ENCODE measurements at regions of chr22 and their contacts with region 1.

Region 1: GRCh38 chr22:36454916-36455570 is 26.4 kb downstream of the TXN2 start:
- DNase-seq: peak; percentile 88 to 99 (median 96)
- ATAC-seq: peak; percentile 71
- H3K4me3 ChIP-seq: peak overlapping the region; percentile 64 to 84
- H3K4me3 Mint-ChIP-seq: peak overlapping the region; percentile 79
- H3K27ac ChIP-seq: peak overlapping the region; percentile 91 to 96
- H3K27ac Mint-ChIP-seq: peak overlapping the region; percentile 90
- H3K4me1 ChIP-seq: peaks cover 51% of the 10 kb centered on the region
- H3K4me1 Mint-ChIP-seq: peaks cover 43% of the 10 kb centered on the region
- H3K27me3 ChIP-seq: no peaks in the 10 kb centered on the region
- H3K27me3 Mint-ChIP-seq: no peaks in the 10 kb centered on the region
- CTCF ChIP-seq: no peak

Region 2: DNA sequence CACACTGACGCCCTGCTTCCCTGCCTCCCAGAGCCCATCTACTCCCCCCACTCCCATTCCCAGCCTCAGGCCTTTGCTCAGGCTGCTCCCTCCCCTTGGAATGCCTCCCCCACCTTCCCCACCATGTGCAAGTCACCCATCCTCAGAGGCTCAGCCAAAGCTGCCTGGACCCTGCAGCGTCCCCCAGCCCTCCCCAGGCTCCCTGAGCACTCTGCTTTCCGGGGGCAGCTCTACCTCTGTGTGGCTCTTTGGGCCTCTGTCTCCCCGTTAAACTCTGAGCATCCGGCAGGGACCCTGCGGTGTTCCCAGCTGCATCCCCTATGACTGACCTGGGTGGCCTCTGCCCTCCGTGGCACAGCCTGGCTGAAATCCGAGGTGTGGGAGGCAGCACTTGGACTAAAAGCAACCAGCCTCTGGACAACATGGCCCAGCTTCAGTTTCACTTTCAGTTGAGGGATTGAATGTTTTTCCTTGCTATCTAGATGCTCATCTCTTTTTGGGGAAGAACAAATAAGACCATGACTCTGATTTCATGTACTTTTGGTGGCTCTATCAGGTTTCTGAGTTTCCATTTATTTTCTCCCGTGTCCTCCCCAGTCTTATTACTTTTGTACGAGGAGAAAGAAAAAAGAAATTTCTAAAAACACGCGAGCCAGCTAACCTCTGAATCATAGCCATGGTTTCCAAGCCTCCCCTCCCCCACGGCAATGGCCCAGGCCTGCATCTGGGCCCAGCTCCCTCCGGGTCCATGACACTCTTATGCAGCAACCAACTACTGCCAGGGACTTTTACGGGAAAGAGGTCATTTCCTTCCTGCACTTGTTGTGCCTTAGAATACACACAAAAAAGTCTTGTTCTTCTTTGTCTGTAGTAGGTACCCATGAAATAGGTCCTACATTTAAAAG is 298.3 kb before region 1 on chr22:
- CTCF ChIA-PET with region 1: no interaction called
- POLR2A ChIA-PET with region 1: no interaction called
- intact Hi-C with region 1: loop called in 1 of 2 experiments (anchors 2 kb)
- DNase-seq: peak; percentile 36 to 90 (median 80)
- ATAC-seq: peak; percentile 46
- H3K4me3 ChIP-seq: peak overlapping the region; percentile 86 to 91
- H3K4me3 Mint-ChIP-seq: peak overlapping the region; percentile 97
- H3K27ac ChIP-seq: peak overlapping the region; percentile 77 to 96
- H3K27ac Mint-ChIP-seq: peak overlapping the region; percentile 99
- H3K4me1 ChIP-seq: peaks cover 62% of the 10 kb centered on the region
- H3K4me1 Mint-ChIP-seq: peaks cover 90% of the 10 kb centered on the region
- H3K27me3 ChIP-seq: no peaks in the 10 kb centered on the region
- H3K27me3 Mint-ChIP-seq: no peaks in the 10 kb centered on the region
- CTCF ChIP-seq: no peak

Region 3: DNA sequence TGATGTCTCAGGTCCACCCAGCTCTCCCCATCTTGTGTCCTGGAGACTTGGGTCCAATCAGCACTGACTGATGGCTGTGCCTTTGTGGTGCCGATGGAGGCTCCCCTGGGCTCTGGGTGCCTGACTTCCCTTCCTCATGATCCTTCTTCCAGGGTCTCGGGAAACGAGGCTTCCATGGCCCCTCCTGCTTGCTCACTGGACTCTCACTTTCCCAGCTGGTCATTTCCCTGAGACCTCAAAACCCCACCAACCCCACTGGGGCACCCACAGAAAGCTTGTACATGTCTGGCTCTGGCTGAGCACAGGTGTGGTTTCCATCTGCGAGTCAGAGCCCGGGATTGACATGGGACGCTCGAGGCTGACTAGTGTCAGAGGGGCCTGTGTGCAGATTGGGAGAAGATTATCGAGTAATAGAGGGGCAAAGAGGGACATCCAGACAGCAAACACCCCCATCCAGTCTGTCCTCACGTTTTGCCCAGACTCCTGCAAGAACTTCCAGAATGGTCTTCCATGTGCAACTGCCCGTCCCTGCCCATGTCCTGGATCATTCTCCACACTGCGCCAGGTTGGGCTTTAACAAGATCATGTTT is 187.1 kb before region 1 on chr22:
- CTCF ChIA-PET with region 1: no interaction called
- POLR2A ChIA-PET with region 1: no interaction called
- intact Hi-C with region 1: no loop called
- DNase-seq: no peak
- ATAC-seq: no peak
- H3K4me3 ChIP-seq: no peak overlapping the region
- H3K4me3 Mint-ChIP-seq: no peak overlapping the region
- H3K27ac ChIP-seq: no peak overlapping the region
- H3K27ac Mint-ChIP-seq: no peak overlapping the region
- H3K4me1 ChIP-seq: no peaks in the 10 kb centered on the region
- H3K4me1 Mint-ChIP-seq: peaks cover 1% of the 10 kb centered on the region
- H3K27me3 ChIP-seq: no peaks in the 10 kb centered on the region
- H3K27me3 Mint-ChIP-seq: no peaks in the 10 kb centered on the region
- CTCF ChIP-seq: no peak

Region 4: GRCh38 chr22:36365020-36365411 is 90.0 kb before region 1 on chr22:
- CTCF ChIA-PET with region 1: no interaction called
- POLR2A ChIA-PET with region 1: interaction called, 3 read pairs
- intact Hi-C with region 1: loop called (anchors 5 kb)
- DNase-seq: peak; percentile 70 to 98 (median 84)
- ATAC-seq: peak; percentile 86
- H3K4me3 ChIP-seq: no peak overlapping the region
- H3K4me3 Mint-ChIP-seq: peak overlapping the region; percentile 68
- H3K27ac ChIP-seq: peak overlapping the region; percentile 57 to 86
- H3K27ac Mint-ChIP-seq: peak overlapping the region; percentile 95
- H3K4me1 ChIP-seq: peaks cover 98% of the 10 kb centered on the region
- H3K4me1 Mint-ChIP-seq: peaks cover 94% of the 10 kb centered on the region
- H3K27me3 ChIP-seq: no peaks in the 10 kb centered on the region
- H3K27me3 Mint-ChIP-seq: no peaks in the 10 kb centered on the region
- CTCF ChIP-seq: no peak

Region 5: DNA sequence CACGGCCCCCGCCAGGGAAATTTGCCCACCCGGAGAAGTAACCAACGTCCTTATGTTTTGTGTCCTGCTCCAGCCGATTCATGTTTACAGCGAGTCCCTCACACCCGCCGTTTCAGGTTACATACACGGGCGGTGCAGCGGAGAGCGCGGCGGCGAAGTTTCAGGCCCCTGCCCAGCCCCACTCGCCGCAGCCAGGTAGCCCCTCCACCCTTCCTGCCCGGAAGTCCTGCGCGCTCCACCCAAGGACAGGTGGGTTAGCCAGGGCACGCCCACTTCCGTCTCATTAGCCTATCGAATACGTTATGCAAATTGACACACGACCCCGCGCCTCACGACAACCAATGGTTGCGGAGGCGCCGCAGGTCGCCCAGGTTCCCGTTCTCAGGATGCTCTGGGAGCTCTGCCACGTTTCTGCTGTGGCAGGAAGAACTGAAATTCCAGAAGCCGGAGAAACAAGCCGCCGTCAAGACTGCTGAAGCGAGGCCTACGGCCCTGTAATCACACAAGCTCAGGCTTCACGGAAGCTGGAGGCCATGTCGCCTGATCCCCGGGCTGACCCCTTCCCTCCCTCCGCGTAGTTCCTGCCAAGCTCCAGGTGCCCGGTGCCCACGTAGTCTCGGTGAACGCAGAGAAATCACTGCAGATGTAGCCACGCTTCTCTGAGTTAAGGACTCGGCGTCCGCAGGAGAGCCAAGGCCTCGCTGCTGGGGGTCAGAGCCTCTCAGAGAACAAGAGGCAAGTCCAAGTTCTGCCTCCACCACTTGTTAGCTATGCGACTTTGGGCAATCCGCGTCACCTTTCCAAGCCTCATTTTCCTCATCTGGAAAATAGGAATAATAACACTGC is 44.9 kb before region 1 on chr22:
- CTCF ChIA-PET with region 1: interaction called, 4 read pairs
- POLR2A ChIA-PET with region 1: interaction called, 7 read pairs
- intact Hi-C with region 1: loop called (anchors 1 to 5 kb)
- DNase-seq: peak; percentile 18 to 85 (median 75)
- ATAC-seq: peak; percentile 70
- H3K4me3 ChIP-seq: peak overlapping the region; percentile 28 to 58
- H3K4me3 Mint-ChIP-seq: peak overlapping the region; percentile 72
- H3K27ac ChIP-seq: peak overlapping the region; percentile 40 to 53
- H3K27ac Mint-ChIP-seq: peak overlapping the region; percentile 93
- H3K4me1 ChIP-seq: peaks cover 57% of the 10 kb centered on the region
- H3K4me1 Mint-ChIP-seq: peaks cover 51% of the 10 kb centered on the region
- H3K27me3 ChIP-seq: no peaks in the 10 kb centered on the region
- H3K27me3 Mint-ChIP-seq: no peaks in the 10 kb centered on the region
- CTCF ChIP-seq: no peak

Region 6: DNA sequence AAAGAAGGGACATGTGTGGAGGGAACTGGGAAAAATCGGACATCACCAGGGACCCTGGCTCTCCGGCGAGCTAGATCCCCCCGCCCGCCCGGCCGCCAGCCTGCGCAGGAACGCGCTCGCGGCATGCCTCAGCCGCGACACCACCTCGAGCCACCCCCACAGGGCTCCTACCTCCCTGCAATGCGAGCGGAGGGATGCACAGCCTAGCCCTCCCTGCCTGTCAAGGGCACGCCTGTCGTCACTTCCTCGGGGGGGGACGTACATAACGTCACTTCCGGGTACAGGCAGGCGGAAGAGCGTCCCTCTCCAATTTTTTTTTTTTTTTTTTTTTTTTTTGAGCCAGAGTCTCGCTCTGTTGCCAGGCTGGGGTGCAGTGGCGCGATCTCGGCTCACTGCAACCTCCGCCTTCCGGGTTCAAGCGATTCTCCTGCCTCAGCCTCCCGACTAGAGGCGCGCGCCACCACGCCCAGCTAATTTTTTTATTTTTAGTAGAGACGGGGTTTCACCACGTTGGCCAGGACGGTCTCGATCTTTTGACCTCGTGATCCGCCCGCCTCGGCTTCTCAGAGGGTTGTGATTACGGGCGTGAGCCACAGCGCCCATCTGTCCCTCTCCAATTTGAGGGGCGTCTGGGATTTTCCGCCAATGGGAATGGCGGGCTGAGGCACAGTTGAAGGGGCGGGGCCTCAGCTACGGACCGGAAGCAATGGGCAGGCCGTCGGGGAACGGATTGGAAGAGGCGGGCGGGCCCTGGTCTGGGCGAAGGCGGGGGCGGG is 26.5 kb after region 1 on chr22 and contains the start of gene TXN2:
- CTCF ChIA-PET with region 1: no interaction called
- POLR2A ChIA-PET with region 1: interaction called, 4 read pairs
- intact Hi-C with region 1: loop called (anchors 1 kb)
- DNase-seq: peak; percentile 91 to 99 (median 97)
- ATAC-seq: peak; percentile 85
- H3K4me3 ChIP-seq: peak within 1 kb of the TSS; percentile 68
- H3K4me3 Mint-ChIP-seq: peak within 1 kb of the TSS; percentile 95
- H3K27ac ChIP-seq: peak within 1 kb of the TSS; percentile 77 to 99
- H3K27ac Mint-ChIP-seq: peak within 1 kb of the TSS; percentile 97
- H3K4me1 ChIP-seq: peaks cover 13% of the 10 kb centered on the region
- H3K4me1 Mint-ChIP-seq: peaks cover 16% of the 10 kb centered on the region
- H3K27me3 ChIP-seq: no peaks in the 10 kb centered on the region
- H3K27me3 Mint-ChIP-seq: no peaks in the 10 kb centered on the region
- CTCF ChIP-seq: no peak
- total RNA-seq, gene TXN2: 24.4 to 29.0 TPM

Region 7: GRCh38 chr22:36528795-36529751 is 74.0 kb after region 1 on chr22 and contains the start of gene EIF3D:
- CTCF ChIA-PET with region 1: no interaction called
- POLR2A ChIA-PET with region 1: no interaction called
- intact Hi-C with region 1: loop called (anchors 1 to 2 kb)
- DNase-seq: peak; percentile 95 to 100 (median 98)
- ATAC-seq: peak; percentile 92
- H3K4me3 ChIP-seq: peak within 1 kb of the TSS; percentile 67 to 90
- H3K4me3 Mint-ChIP-seq: peak within 1 kb of the TSS; percentile 90
- H3K27ac ChIP-seq: peak within 1 kb of the TSS; percentile 91 to 93
- H3K27ac Mint-ChIP-seq: peak within 1 kb of the TSS; percentile 99
- H3K4me1 ChIP-seq: peaks cover 12% of the 10 kb centered on the region
- H3K4me1 Mint-ChIP-seq: peaks cover 24% of the 10 kb centered on the region
- H3K27me3 ChIP-seq: no peaks in the 10 kb centered on the region
- H3K27me3 Mint-ChIP-seq: no peaks in the 10 kb centered on the region
- CTCF ChIP-seq: no peak
- total RNA-seq, gene EIF3D: 302 to 315 TPM

Region 8: GRCh38 chr22:37623075-37624016 is 1168.3 kb after region 1 on chr22:
- CTCF ChIA-PET with region 1: no interaction called
- POLR2A ChIA-PET with region 1: no interaction called
- intact Hi-C with region 1: no loop called
- DNase-seq: peak; percentile 64 to 87 (median 79)
- ATAC-seq: peak; percentile 86
- H3K4me3 ChIP-seq: peak overlapping the region in 1 of 2 experiments; percentile 25
- H3K4me3 Mint-ChIP-seq: peak overlapping the region; percentile 68
- H3K27ac ChIP-seq: peak overlapping the region; percentile 29 to 58
- H3K27ac Mint-ChIP-seq: peak overlapping the region; percentile 95
- H3K4me1 ChIP-seq: peaks cover 53% of the 10 kb centered on the region
- H3K4me1 Mint-ChIP-seq: peaks cover 50% of the 10 kb centered on the region
- H3K27me3 ChIP-seq: no peaks in the 10 kb centered on the region
- H3K27me3 Mint-ChIP-seq: no peaks in the 10 kb centered on the region
- CTCF ChIP-seq: peak; percentile 86